Colonic mucosa (tissue), 4 donors: ENCODE measurements at regions of chr17 and their contacts with region 1.

Region 1: GRCh38 chr17:67376737-67377487 is at the start of gene PITPNC1:
- DNase-seq: peak; percentile 89
- H3K4me3 ChIP-seq: peak within 1 kb of the TSS; percentile 82
- H3K27ac ChIP-seq: peak within 1 kb of the TSS; percentile 92
- H3K4me1 ChIP-seq: no peaks in the 10 kb centered on the region
- H3K27me3 ChIP-seq: no peaks in the 10 kb centered on the region
- CTCF ChIP-seq: no peak
- total RNA-seq, gene PITPNC1: 10.8 to 20.4 TPM

Region 2: DNA sequence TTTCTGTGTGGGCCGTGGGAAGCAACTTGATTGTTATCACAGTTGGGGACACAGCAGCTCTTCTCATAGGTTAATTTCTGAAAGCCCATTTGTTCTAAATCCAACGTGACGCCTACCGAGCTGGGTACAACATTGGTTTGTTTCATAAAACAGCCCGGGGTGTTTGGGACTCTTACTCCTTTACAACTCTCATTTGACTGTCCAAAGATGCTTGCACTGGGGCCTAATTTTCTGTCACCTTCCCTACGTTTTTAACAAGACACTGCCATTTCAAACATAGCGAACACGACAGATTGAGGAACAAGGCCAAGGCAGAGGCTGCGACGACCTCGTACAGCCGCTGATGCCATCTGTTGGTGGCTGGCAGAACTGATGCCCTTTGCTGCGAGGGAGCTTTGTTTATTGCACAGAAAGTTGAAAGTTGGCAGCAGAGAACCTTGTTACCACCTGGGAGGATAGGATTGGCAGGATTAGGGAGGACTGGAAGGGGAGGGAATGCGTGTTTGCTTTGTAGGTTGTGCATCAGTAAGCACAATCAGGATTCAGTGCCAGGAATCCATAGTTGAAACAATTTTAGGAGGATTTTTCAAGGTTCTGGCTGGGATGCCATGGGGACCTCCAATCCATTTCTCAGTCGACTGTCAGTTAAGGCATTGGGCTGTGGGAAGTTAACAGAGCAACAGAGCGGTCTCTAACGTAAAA is 98.5 kb after region 1 on chr17:
- intact Hi-C with region 1: loop called (anchors 2 kb)
- DNase-seq: peak; percentile 84
- H3K4me3 ChIP-seq: no peak overlapping the region
- H3K27ac ChIP-seq: no peak overlapping the region
- H3K4me1 ChIP-seq: no peaks in the 10 kb centered on the region
- H3K27me3 ChIP-seq: no peaks in the 10 kb centered on the region
- CTCF ChIP-seq: peak; percentile 90

Region 3: GRCh38 chr17:67602956-67603355 is 226.0 kb after region 1 on chr17:
- intact Hi-C with region 1: loop called (anchors 10 kb)
- DNase-seq: peak; percentile 22
- H3K4me3 ChIP-seq: no peak overlapping the region
- H3K27ac ChIP-seq: no peak overlapping the region
- H3K4me1 ChIP-seq: no peaks in the 10 kb centered on the region
- H3K27me3 ChIP-seq: no peaks in the 10 kb centered on the region
- CTCF ChIP-seq: peak; percentile 54

Region 4: GRCh38 chr17:67689534-67690177 is 312.7 kb after region 1 on chr17:
- intact Hi-C with region 1: loop called (anchors 2 kb)
- DNase-seq: peak; percentile 64
- H3K4me3 ChIP-seq: no peak overlapping the region
- H3K27ac ChIP-seq: no peak overlapping the region
- H3K4me1 ChIP-seq: no peaks in the 10 kb centered on the region
- H3K27me3 ChIP-seq: no peaks in the 10 kb centered on the region
- CTCF ChIP-seq: peak; percentile 74